ENCODE measurements at regions of chr7 and their contacts with region 1.

Region 1: DNA sequence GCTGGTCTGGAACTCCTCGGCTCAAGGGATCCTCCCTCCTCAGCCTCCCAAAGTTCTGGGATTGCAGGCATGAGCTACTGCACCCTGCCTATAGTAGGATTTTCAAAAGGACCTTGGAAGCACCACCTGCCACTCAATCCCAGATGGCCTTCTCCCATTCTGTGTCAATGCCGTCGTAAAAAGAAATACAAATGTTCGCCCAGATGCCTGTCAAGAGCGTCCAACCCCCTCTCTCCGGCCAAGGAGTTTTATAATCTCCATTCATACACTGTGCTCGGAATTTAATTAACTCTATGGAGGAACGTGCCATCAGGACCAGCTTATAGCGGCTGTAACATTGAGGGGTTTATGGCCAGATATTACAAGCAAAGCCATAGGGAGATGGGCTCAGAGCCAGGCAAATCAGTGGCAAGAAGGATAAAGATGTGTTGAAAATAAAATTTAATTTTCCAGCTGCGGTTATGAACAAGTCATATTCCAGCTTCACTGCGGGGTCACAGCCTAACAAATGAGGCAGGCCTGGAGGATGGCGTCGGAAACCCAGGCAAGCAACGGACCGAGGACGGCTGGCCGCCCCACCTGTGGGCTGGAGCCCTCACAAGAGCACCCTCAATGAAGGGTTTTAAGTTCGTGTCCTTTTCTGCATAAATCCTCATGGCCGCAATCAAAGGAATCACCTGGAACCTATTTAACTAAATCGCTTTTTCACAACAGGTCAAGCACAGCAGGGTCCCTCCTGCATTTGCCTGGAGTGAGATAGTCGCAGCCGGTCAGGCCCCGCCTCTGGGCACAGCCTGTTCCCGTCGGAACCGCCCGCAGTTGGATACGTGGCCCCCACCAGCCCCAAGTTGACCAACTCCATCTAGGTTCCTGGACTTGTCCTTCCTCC is 374.5 kb upstream of the FOXK1 start:
- DNase-seq: no peak
- H3K4me3 ChIP-seq: no peak overlapping the region
- H3K27ac ChIP-seq: no peak overlapping the region
- H3K4me1 ChIP-seq: no peaks in the 10 kb centered on the region
- H3K27me3 ChIP-seq: no peaks in the 10 kb centered on the region
- CTCF ChIP-seq: no peak
- EP300 ChIP-seq: no peak
- POLR2A ChIP-seq: no peak

Region 2: DNA sequence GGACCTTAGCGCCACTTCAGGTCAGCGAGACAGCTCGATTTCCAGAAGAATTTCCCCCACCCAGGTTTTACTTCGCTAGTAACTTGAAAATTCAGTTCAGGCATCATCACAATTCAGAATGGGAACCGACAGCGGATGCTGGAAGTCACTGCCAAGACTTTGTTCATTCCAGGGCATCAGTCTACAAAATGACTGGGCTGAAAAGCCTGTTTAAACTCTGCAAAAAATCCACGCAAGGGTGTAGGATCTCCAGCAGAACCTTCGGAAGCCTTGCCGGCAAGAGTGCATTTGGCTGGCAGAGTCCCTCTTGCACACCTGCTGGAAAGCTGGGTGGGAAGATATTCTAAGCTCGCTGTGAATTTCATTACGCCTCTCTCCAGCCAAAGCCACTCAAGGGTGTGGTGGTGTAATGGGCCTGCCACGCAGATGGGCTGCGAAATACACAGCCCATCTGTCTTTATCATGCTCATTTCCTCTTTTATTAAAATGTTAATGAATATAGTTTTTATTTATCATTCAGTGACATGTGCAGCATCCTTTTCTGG is 297.4 kb before region 1 on chr7:
- in situ Hi-C with region 1: no loop called
- intact Hi-C with region 1: no loop called
- DNase-seq: no peak
- H3K4me3 ChIP-seq: no peak overlapping the region
- H3K27ac ChIP-seq: no peak overlapping the region
- H3K4me1 ChIP-seq: no peaks in the 10 kb centered on the region
- H3K27me3 ChIP-seq: no peaks in the 10 kb centered on the region
- CTCF ChIP-seq: no peak
- EP300 ChIP-seq: no peak
- POLR2A ChIP-seq: no peak

Region 3: GRCh38 chr7:4204513-4205165 is 102.9 kb before region 1 on chr7:
- in situ Hi-C with region 1: no loop called
- intact Hi-C with region 1: no loop called
- DNase-seq: no peak
- H3K4me3 ChIP-seq: no peak overlapping the region
- H3K27ac ChIP-seq: no peak overlapping the region
- H3K4me1 ChIP-seq: no peaks in the 10 kb centered on the region
- H3K27me3 ChIP-seq: no peaks in the 10 kb centered on the region
- CTCF ChIP-seq: no peak
- EP300 ChIP-seq: no peak
- POLR2A ChIP-seq: no peak

Region 4: DNA sequence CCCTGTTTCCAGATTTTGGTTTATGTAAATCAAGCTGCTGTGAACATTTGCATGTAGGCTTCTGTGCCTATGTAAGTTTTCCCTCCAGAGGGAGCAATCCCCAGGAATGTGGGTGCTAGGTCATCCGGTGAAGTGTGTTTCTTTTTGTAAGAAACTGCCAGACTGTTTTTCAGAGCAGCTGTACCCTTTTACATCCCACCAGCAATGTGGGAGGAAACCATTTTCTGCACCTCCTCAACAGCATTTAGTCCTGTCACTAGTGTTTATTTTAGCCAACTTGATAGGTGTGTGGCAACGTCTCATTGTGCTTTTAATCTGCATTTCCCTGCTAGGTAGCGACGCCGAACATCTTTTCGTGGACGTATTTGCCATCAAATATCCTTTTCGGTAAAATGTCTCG is 21.2 kb before region 1 on chr7:
- in situ Hi-C with region 1: no loop called
- intact Hi-C with region 1: loop called (anchors 2 kb)
- DNase-seq: no peak
- H3K4me3 ChIP-seq: no peak overlapping the region
- H3K27ac ChIP-seq: no peak overlapping the region
- H3K4me1 ChIP-seq: no peaks in the 10 kb centered on the region
- H3K27me3 ChIP-seq: no peaks in the 10 kb centered on the region
- CTCF ChIP-seq: no peak
- EP300 ChIP-seq: no peak
- POLR2A ChIP-seq: no peak